GM12878 (cell line): ENCODE measurements at regions of chr4 and their contacts with region 1.

Region 1: GRCh38 chr4:112031712-112032328 is 113.4 kb upstream of the FAM241A start:
- DNase-seq: peak; percentile 13
- ATAC-seq: peak; percentile 93
- H3K4me3 ChIP-seq: no peak overlapping the region
- H3K27ac ChIP-seq: no peak overlapping the region
- H3K4me1 ChIP-seq: no peaks in the 10 kb centered on the region
- H3K27me3 ChIP-seq: no peaks in the 10 kb centered on the region
- CTCF ChIP-seq: peak; percentile 53 to 81 (median 62)
- EP300 ChIP-seq: no peak
- POLR2A ChIP-seq: no peak
- RAD21 ChIP-seq: peak; percentile 86

Region 2: GRCh38 chr4:110631584-110632505 is 1400.0 kb before region 1 on chr4:
- CTCF ChIA-PET with region 1: no interaction called
- POLR2A ChIA-PET with region 1: no interaction called
- RAD21 ChIA-PET with region 1: no interaction called
- SMC1A ChIA-PET with region 1: no interaction called
- in situ Hi-C with region 1: loop called (anchors 25 kb)
- intact Hi-C with region 1: no loop called
- DNase-seq: no peak
- ATAC-seq: peak; percentile 99
- H3K4me3 ChIP-seq: no peak overlapping the region
- H3K27ac ChIP-seq: no peak overlapping the region
- H3K4me1 ChIP-seq: no peaks in the 10 kb centered on the region
- H3K27me3 ChIP-seq: peaks cover 18 to 42% of the 10 kb centered on the region in 2 experiments
- CTCF ChIP-seq: peak; percentile 52 to 75 (median 61)
- EP300 ChIP-seq: no peak
- POLR2A ChIP-seq: no peak
- RAD21 ChIP-seq: peak; percentile 61

Region 3: GRCh38 chr4:111641955-111642579 is 389.8 kb before region 1 on chr4:
- CTCF ChIA-PET with region 1: interaction called, 24 read pairs
- POLR2A ChIA-PET with region 1: no interaction called
- RAD21 ChIA-PET with region 1: interaction called, 8 read pairs
- SMC1A ChIA-PET with region 1: interaction called, 20 read pairs
- in situ Hi-C with region 1: loop called (anchors 5 kb)
- intact Hi-C with region 1: loop called (anchors 1 kb)
- DNase-seq: peak; percentile 13
- ATAC-seq: peak; percentile 98
- H3K4me3 ChIP-seq: no peak overlapping the region
- H3K27ac ChIP-seq: no peak overlapping the region
- H3K4me1 ChIP-seq: no peaks in the 10 kb centered on the region
- H3K27me3 ChIP-seq: no peaks in the 10 kb centered on the region; a peak in 1 of 4 replicates
- CTCF ChIP-seq: peak; percentile 80 to 97 (median 83)
- EP300 ChIP-seq: no peak
- POLR2A ChIP-seq: no peak
- RAD21 ChIP-seq: peak; percentile 74

Region 4: DNA sequence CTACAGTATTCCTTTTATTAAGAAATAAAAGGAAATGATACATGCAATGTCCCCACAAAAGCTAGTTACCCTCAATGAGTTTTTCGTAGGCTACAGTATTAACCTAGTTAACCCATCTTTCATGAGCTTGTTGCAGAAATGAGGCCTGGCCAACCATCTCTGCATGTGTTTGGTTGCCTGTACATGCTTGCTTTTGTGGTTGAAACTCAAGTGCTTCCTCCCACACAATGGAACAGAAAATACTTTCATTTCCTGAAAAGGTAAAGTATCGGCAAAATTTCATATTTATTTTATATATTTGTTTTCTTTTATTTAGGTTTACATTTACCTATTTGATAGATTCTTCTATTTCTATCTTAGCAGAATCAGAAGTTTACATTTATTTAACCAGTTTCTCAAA is 101.2 kb before region 1 on chr4:
- CTCF ChIA-PET with region 1: interaction called, 7 read pairs
- POLR2A ChIA-PET with region 1: no interaction called
- RAD21 ChIA-PET with region 1: interaction called, 12 read pairs
- SMC1A ChIA-PET with region 1: interaction called, 27 read pairs
- in situ Hi-C with region 1: no loop called
- intact Hi-C with region 1: no loop called
- DNase-seq: peak; percentile 41
- ATAC-seq: peak; percentile 99
- H3K4me3 ChIP-seq: no peak overlapping the region
- H3K27ac ChIP-seq: no peak overlapping the region
- H3K4me1 ChIP-seq: peaks cover 2% of the 10 kb centered on the region; the same call in 1 of the 2 replicates
- H3K27me3 ChIP-seq: no peaks in the 10 kb centered on the region
- CTCF ChIP-seq: no peak
- EP300 ChIP-seq: peak; percentile 20 to 82; a peak in 2 of 4 replicates
- POLR2A ChIP-seq: no peak
- RAD21 ChIP-seq: no peak

Region 5: GRCh38 chr4:111952688-111953087 is 79.1 kb before region 1 on chr4:
- CTCF ChIA-PET with region 1: interaction called, 392 read pairs
- POLR2A ChIA-PET with region 1: no interaction called
- RAD21 ChIA-PET with region 1: interaction called, 9 read pairs
- SMC1A ChIA-PET with region 1: interaction called, 45 read pairs
- in situ Hi-C with region 1: loop called (anchors 5 kb)
- intact Hi-C with region 1: no loop called
- DNase-seq: no peak
- ATAC-seq: no peak
- H3K4me3 ChIP-seq: no peak overlapping the region
- H3K27ac ChIP-seq: no peak overlapping the region
- H3K4me1 ChIP-seq: no peaks in the 10 kb centered on the region
- H3K27me3 ChIP-seq: no peaks in the 10 kb centered on the region
- CTCF ChIP-seq: no peak
- EP300 ChIP-seq: no peak
- POLR2A ChIP-seq: no peak
- RAD21 ChIP-seq: no peak

Region 6: DNA sequence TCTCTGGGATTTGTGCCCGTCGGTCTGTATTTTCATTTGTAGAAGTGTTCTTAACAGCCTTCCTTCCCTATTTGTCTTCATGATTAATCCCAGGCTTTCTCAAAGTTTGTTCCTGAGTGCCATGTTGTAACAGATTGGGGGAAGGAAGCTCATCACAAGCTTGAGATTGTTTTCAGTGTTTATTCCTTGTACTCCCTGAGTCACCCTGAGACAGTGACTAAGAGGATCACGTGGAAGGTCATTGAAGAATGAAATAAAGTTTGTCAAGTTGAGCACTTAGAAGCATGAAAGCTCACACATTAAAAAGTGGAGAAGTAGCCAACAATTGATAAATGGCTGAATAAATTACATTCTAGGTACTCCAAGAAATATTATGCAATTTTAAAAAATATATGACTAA is 40.0 kb before region 1 on chr4:
- CTCF ChIA-PET with region 1: interaction called, 22 read pairs
- POLR2A ChIA-PET with region 1: interaction called, 3 read pairs
- RAD21 ChIA-PET with region 1: interaction called, 6 read pairs
- SMC1A ChIA-PET with region 1: interaction called, 22 read pairs
- in situ Hi-C with region 1: no loop called
- intact Hi-C with region 1: no loop called
- DNase-seq: peak; percentile 13
- ATAC-seq: peak; percentile 69
- H3K4me3 ChIP-seq: no peak overlapping the region
- H3K27ac ChIP-seq: no peak overlapping the region
- H3K4me1 ChIP-seq: peaks cover 12% of the 10 kb centered on the region
- H3K27me3 ChIP-seq: peaks cover 0 to 2% of the 10 kb centered on the region in 2 experiments; a peak in 1 of 4 replicates
- CTCF ChIP-seq: no peak
- EP300 ChIP-seq: no peak
- POLR2A ChIP-seq: no peak
- RAD21 ChIP-seq: no peak

Region 7: DNA sequence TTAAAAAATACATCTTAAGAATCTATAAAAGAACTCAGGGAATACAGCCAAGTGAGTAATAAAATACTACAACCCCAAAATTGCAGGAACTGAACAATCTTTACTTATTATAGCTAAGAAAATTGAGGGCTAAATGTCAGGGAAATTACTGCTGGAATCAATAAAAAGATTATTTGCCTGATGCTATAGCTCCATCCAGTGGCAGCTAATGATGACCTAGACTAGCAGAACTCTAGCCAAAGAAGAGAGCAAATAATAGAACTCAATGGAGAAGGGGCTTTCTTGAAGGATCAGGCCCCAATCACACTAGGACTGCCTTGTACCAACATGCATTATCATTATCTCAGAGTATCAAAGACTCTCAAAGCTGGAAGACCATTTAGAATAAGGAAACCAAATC is 28.4 kb after region 1 on chr4:
- CTCF ChIA-PET with region 1: interaction called, 12 read pairs
- POLR2A ChIA-PET with region 1: no interaction called
- RAD21 ChIA-PET with region 1: interaction called, 3 read pairs
- SMC1A ChIA-PET with region 1: interaction called, 6 read pairs
- in situ Hi-C with region 1: no loop called
- intact Hi-C with region 1: loop called (anchors 1 kb)
- DNase-seq: no peak
- ATAC-seq: peak; percentile 77
- H3K4me3 ChIP-seq: no peak overlapping the region
- H3K27ac ChIP-seq: no peak overlapping the region
- H3K4me1 ChIP-seq: no peaks in the 10 kb centered on the region
- H3K27me3 ChIP-seq: no peaks in the 10 kb centered on the region
- CTCF ChIP-seq: peak; percentile 49 to 67 (median 54); a peak in 5 of 6 replicates
- EP300 ChIP-seq: no peak
- POLR2A ChIP-seq: no peak
- RAD21 ChIP-seq: peak; percentile 66

Region 8: DNA sequence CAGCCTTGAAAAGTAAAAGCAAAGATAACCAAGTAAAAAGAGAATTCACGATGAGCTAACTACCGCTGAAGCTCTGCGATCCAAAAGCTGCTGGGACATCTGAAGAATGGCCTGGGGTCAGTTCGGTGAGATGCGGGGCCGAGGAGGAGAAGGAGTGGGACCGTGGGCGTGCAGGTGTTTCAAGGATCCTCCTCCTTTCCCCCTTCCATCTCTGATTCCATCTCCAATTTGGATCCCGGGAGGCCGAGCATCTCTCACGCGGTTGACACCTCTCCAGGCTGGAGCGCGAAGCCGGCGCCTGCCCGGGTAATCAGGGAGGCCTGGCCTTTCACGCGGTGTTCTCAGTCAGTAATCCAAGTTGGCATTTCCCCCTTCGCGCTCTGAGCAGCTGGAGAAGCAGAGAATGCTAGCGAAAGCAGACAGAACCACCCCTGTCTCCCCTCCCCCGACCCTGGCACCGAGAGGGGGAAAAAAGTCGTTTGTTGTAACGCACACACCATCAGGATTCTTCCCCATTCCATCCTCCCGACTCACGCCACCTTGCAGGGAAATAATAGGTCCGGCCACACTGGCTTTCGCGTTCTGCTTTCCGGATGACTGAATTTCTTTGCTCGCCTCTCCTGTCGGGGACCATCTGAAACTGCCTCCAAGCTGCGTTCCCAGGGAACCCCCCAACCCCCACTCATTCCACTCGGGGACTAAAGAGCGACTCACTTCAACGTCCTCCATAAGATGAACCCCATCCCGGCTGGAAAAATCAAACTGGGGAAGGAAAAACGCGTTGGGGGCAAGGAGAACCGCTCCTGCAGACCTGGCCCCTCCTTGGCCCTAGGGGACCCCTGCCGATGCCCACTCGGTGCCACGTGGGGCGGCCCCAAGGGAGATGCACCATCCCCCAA is 477.7 kb after region 1 on chr4:
- CTCF ChIA-PET with region 1: no interaction called
- POLR2A ChIA-PET with region 1: no interaction called
- RAD21 ChIA-PET with region 1: no interaction called
- SMC1A ChIA-PET with region 1: no interaction called
- in situ Hi-C with region 1: no loop called
- intact Hi-C with region 1: no loop called
- DNase-seq: no peak
- ATAC-seq: no peak; the same call in 2 of the 3 replicates
- H3K4me3 ChIP-seq: 0 out of 2 replicates have a peak overlapping the region, but pooled peaks have one; percentile 34
- H3K27ac ChIP-seq: no peak overlapping the region
- H3K4me1 ChIP-seq: no peaks in the 10 kb centered on the region
- H3K27me3 ChIP-seq: peaks cover 15% of the 10 kb centered on the region in 2 experiments
- CTCF ChIP-seq: no peak
- EP300 ChIP-seq: no peak
- POLR2A ChIP-seq: no peak
- RAD21 ChIP-seq: no peak